K562 (cell line): ENCODE measurements at regions of chr1 and their contacts with region 1.

Region 1: DNA sequence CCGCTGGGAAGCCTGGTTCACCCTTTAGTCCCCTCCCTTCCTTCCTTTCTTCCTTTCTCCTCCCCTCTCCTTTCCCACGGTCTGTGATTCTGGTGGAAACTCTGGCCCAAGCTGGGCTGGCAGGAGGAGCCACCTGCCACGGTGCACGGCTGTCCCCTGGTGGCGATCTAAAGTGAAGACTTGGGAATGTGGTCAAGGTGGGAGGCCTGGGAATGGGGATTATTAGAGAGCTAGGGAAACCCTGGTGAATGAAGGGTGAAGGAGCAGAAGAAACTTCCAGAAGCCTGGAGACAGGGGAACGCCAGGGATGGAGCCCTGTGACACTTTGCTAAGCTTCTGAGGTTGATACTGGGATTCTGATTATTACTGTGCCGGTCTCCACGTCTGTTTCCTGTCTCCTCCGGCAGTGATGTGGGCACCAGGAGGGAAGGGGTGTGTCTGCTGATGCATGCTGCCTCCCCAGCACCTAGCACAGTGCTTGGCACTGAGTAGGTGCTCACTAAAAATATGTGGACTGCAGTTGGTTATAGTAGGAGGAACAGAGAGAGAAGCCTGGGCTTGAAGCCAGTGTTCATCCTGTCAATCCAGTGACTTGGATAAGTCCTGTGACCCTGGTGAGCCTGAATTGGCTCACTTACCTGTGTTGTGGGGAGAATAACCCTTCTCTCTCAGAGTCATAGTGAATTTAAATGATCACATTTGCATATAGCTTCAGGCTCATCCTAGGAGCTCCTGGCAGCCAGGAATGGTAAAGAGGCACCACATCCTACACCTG is 71.2 kb upstream of the NBPF3 start:
- DNase-seq: peak; percentile 72 to 86 (median 82)
- ATAC-seq: peak; percentile 91
- H3K4me3 ChIP-seq: no peak overlapping the region
- H3K27ac ChIP-seq: no peak overlapping the region
- H3K4me1 ChIP-seq: peaks cover 0 to 5% of the 10 kb centered on the region in 2 experiments; a peak in 1 of 5 replicates
- H3K27me3 ChIP-seq: peaks cover 5 to 6% of the 10 kb centered on the region in 2 experiments; a peak in 3 of 5 replicates
- CTCF ChIP-seq: peak; percentile 98 to 99 (median 99)
- EP300 ChIP-seq: peak; percentile 34
- POLR2A ChIP-seq: no peak
- RAD21 ChIP-seq: peak; percentile 100

Region 2: DNA sequence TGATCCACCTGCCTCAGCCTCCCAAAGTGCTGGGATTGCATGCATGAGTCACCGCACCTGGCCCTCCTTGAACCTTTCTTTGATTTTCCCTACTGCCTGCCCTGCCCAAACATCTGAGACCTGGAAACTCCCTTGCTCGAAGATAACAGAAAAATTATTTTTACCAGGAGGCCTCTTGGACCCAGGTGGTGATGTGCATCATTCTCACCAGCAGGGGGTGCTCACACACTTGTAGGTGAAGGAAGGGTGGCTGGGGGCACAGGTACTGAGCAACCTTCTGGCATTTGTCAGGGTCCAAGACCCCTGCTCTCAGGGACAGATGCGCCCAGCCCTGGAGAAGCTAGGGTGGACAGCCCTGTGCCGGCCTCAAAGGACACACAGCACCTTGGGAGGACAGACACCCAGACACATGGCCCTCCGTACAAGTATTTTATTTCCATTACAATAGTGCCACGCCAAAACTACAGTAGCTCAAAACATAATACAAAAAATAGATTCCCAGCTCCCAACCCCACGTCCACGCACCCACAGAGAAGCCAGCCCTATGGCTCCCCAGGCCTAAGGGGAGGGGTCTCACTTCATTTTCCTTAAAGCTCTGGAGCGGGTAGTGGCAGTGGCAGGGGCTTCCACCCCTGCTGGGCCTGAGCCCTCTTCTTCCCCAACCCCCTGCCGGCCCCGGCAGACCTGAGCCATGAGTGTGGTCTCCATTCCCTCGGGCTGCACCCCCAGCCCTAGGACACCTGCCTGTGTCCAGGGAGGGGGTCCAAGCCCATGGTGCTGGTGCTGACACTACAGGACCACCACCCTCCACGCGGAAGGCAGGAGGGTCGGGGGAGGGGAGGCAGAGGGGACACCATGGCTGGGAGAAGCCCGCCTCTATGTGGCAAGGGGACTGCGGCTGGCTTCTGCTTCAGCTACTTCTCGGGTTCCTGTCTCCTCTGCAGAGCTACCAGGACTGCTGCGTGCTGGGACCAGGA is 151.6 kb before region 1 on chr1:
- CTCF ChIA-PET with region 1: interaction called, 12 read pairs
- POLR2A ChIA-PET with region 1: interaction called, 3 read pairs
- in situ Hi-C with region 1: no loop called
- intact Hi-C with region 1: loop called (anchors 5 kb)
- DNase-seq: peak; percentile 75 to 84 (median 81)
- ATAC-seq: peak; percentile 84
- H3K4me3 ChIP-seq: no peak overlapping the region
- H3K27ac ChIP-seq: no peak overlapping the region
- H3K4me1 ChIP-seq: peaks cover 3 to 19% of the 10 kb centered on the region in 2 experiments; a peak in 4 of 5 replicates
- H3K27me3 ChIP-seq: 0 out of 5 replicates have a peak, but pooled peaks cover 0 to 7% of the 10 kb centered on the region in 2 experiments
- CTCF ChIP-seq: peak; percentile 85 to 95 (median 89)
- EP300 ChIP-seq: no peak
- POLR2A ChIP-seq: no peak
- RAD21 ChIP-seq: peak; percentile 40 to 76

Region 3: DNA sequence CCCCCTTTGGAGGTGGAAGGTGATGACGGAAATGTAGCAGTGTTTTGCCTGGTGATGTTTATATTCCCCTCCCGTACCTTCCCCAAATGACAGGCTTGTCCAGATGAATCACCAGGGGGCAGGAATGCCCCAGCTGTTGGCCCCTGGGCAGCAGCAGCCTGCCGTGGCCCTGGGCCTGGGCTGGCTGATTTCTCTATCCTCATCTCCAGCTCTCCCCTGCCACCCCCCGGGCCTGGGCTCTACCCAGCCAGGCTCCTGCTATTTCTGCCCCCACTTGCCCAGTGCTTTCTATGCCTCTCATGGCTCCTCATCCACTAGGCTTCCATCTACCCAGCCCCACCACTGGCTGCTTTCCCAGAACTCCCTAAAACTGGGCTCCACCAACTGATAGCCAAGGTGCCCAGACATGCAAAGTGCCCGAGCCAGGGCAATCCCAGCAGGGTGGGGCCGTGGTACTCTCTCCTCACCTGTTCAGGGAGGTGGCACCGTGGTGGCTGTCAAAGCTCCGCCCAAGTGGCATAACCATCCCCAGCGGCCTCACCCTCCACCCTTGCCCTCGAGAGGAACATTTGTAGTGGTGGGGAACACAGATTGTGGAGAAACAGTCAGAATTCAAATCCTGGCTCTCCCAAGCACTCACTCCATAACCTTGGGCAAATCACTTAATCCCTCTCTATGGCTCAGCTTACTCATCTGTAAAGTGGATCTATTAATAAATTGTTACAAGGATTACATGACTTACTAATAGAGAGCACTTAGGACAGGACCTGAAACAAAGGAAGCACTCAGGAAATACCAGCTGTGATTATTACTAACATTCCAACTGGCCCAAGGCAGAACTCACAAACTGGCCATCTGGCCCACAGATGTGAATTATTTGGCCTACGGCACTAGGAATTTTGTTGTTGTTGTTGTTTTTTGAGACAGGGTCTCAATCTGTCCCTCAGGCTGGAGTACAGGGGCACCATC is 65.7 kb before region 1 on chr1:
- CTCF ChIA-PET with region 1: interaction called, 12 read pairs
- POLR2A ChIA-PET with region 1: interaction called, 4 read pairs
- in situ Hi-C with region 1: no loop called
- intact Hi-C with region 1: no loop called
- DNase-seq: no peak
- ATAC-seq: no peak
- H3K4me3 ChIP-seq: no peak overlapping the region
- H3K27ac ChIP-seq: no peak overlapping the region
- H3K4me1 ChIP-seq: peaks cover 9 to 21% of the 10 kb centered on the region in 2 experiments; a peak in 4 of 5 replicates
- H3K27me3 ChIP-seq: no peaks in the 10 kb centered on the region; a peak in 1 of 5 replicates
- CTCF ChIP-seq: peak in 2 of 3 experiments; percentile 9 to 48; a peak in 2 of 6 replicates
- EP300 ChIP-seq: no peak
- POLR2A ChIP-seq: no peak
- RAD21 ChIP-seq: peak in 1 of 2 experiments; percentile 40; a peak in 2 of 4 replicates

Region 4: GRCh38 chr1:21490774-21491553 is 122.3 kb after region 1 on chr1:
- CTCF ChIA-PET with region 1: interaction called, 16 read pairs
- POLR2A ChIA-PET with region 1: no interaction called
- in situ Hi-C with region 1: no loop called
- intact Hi-C with region 1: loop called (anchors 2 kb)
- DNase-seq: peak; percentile 36 to 62 (median 46)
- ATAC-seq: peak; percentile 83
- H3K4me3 ChIP-seq: no peak overlapping the region
- H3K27ac ChIP-seq: no peak overlapping the region
- H3K4me1 ChIP-seq: peaks cover 0 to 10% of the 10 kb centered on the region in 2 experiments; a peak in 3 of 5 replicates
- H3K27me3 ChIP-seq: peaks cover 21 to 40% of the 10 kb centered on the region in 2 experiments; a peak in 4 of 5 replicates
- CTCF ChIP-seq: peak; percentile 66 to 72 (median 69)
- EP300 ChIP-seq: no peak
- POLR2A ChIP-seq: no peak
- RAD21 ChIP-seq: peak; percentile 20 to 76; a peak in 3 of 4 replicates

Region 5: DNA sequence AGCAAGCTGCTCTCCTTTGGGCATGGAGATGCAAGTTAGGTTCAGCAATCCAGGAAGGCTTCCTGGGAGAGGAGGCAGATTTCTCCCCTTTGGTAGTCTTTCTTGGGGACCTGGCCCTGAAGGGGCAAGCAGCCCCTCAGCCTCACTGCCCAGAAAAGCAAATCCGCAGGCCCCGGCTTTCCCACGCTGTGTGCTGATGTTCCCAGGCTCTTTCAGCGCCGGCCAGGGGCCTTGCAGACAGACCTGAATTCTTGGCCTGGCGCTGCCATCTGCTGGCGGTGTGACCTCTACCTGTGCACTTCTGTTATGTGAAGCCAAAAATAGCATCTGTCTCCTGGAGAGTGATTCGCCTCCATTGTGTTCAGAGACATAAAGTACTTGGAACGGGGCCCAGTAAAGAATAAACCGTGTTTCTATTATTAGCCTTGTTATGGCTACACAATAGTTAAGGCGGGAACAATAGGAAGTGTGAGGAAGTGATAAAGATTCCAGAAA is 205.3 kb after region 1 on chr1:
- CTCF ChIA-PET with region 1: interaction called, 27 read pairs
- POLR2A ChIA-PET with region 1: no interaction called
- in situ Hi-C with region 1: no loop called
- intact Hi-C with region 1: loop called (anchors 10 kb)
- DNase-seq: peak; percentile 49 to 75 (median 60)
- ATAC-seq: peak; percentile 85
- H3K4me3 ChIP-seq: no peak overlapping the region
- H3K27ac ChIP-seq: no peak overlapping the region
- H3K4me1 ChIP-seq: peaks cover 4 to 27% of the 10 kb centered on the region in 2 experiments; a peak in 4 of 5 replicates
- H3K27me3 ChIP-seq: peaks cover 0 to 30% of the 10 kb centered on the region in 2 experiments; a peak in 1 of 5 replicates
- CTCF ChIP-seq: peak; percentile 74 to 79 (median 75)
- EP300 ChIP-seq: no peak
- POLR2A ChIP-seq: no peak
- RAD21 ChIP-seq: peak in 1 of 2 experiments; percentile 87; a peak in 3 of 4 replicates

Region 6: DNA sequence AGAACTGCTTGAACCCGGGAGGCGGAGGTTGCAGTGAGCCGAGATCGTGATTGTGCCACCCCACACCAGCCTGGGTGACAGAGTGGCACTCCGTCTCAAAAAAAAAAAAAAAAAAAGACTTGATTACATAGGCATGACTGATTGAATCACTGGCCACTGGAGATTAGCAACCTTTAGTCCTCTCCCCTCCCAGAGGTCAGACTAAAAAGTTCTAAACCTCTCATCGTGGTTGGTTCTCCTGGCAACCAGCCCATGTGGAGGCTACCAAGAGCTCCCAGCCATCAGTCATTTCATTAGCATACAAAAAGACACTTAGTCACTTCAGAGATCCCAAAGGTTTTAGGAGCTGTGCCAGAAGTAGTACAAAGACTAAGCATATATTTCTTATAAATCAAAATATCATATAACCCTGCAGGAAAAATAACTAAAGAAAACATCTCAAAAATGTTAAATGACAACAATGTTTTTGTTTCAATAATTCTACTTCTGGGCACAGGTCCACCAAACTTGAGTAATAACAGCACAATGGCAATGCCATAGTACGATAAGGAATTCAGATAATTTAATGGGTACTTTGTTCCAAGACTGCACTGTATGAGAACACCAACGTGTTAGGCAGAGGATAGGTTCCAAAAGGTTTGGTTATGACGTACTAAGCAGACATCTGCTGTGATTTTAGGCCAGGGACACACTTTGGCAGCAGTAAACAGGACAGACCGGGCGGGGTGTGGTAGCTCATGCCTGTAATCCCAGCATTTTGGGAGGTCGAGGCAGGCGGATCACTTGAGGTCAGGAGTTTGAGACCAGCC is 396.1 kb after region 1 on chr1:
- CTCF ChIA-PET with region 1: no interaction called
- POLR2A ChIA-PET with region 1: no interaction called
- in situ Hi-C with region 1: no loop called
- intact Hi-C with region 1: no loop called
- DNase-seq: peak in 2 of 4 experiments; percentile 47 to 80
- ATAC-seq: peak; percentile 52
- H3K4me3 ChIP-seq: no peak overlapping the region
- H3K27ac ChIP-seq: no peak overlapping the region
- H3K4me1 ChIP-seq: peaks cover 52 to 62% of the 10 kb centered on the region in 2 experiments
- H3K27me3 ChIP-seq: no peaks in the 10 kb centered on the region
- CTCF ChIP-seq: no peak
- EP300 ChIP-seq: 0 out of 2 replicates have a peak, but pooled peaks have one; percentile 29
- POLR2A ChIP-seq: no peak
- RAD21 ChIP-seq: no peak